Transverse colon (tissue), 4 donors: ENCODE measurements at regions of chr3 and their contacts with region 1.

Region 1: GRCh38 chr3:101195951-101196713 is 124.2 kb downstream of the IMPG2 start:
- DNase-seq: no peak
- H3K4me3 ChIP-seq: no peak overlapping the region
- H3K27ac ChIP-seq: no peak overlapping the region
- H3K4me1 ChIP-seq: peaks cover 0 to 7% (median 0%) of the 10 kb centered on the region in 4 donors
- H3K27me3 ChIP-seq: no peaks in the 10 kb centered on the region
- CTCF ChIP-seq: peak; percentile 49 to 64 (median 50)
- EP300 ChIP-seq: no peak
- POLR2A ChIP-seq: no peak

Region 2: DNA sequence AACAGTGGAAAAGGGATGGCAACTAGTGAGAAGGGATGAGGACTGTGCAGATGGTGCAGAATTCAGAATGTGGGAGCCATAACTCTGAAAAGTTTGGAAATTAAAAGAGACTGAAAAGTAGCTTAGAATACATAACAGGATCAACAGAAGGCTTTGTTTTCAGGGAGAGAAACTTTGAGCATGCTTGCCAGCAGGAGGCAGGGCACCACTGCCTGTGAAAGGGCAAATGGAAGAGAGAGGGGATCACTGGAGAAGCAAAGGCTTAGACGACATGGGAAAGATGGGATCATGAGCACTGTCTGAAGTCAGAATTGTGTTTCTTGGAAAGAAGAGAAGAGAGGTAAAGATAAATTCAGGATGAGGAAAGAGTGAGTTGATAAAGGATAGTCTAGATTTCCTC is 302.5 kb before region 1 on chr3:
- in situ Hi-C with region 1: no loop called
- intact Hi-C with region 1: loop called (anchors 10 kb)
- DNase-seq: peak; percentile 11
- H3K4me3 ChIP-seq: no peak overlapping the region
- H3K27ac ChIP-seq: no peak overlapping the region
- H3K4me1 ChIP-seq: no peaks in the 10 kb centered on the region
- H3K27me3 ChIP-seq: no peaks in the 10 kb centered on the region
- CTCF ChIP-seq: peak; percentile 29 to 37 (median 30)
- EP300 ChIP-seq: no peak
- POLR2A ChIP-seq: no peak

Region 3: GRCh38 chr3:101069901-101070798 is 126.0 kb before region 1 on chr3:
- in situ Hi-C with region 1: no loop called
- intact Hi-C with region 1: loop called (anchors 1 kb)
- DNase-seq: peak; percentile 84
- H3K4me3 ChIP-seq: peak overlapping the region in 1 of 4 donors; percentile 17
- H3K27ac ChIP-seq: peak overlapping the region; percentile 20 to 61 (median 38)
- H3K4me1 ChIP-seq: peaks cover 6 to 52% (median 12%) of the 10 kb centered on the region in 4 donors
- H3K27me3 ChIP-seq: no peaks in the 10 kb centered on the region
- CTCF ChIP-seq: peak; percentile 60 to 82 (median 72)
- EP300 ChIP-seq: no peak
- POLR2A ChIP-seq: no peak

Region 4: DNA sequence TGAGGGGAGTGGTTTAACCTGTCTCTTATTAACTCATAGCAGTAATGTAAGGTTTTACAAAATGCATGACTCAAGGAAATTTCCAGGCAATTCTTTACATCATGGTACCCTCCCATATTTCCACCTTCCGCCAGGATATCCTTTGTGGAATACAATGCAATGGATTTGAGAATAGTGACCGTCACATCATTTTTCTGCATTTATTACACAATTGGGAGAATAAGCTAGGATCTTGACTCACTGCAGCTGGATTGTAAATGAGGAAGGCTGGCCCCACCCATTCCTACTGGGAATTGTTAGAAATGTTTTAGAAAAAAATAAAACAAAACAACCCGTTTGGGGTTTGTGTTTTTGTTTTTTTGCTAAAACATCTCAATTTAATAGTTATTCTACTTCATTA is 26.9 kb after region 1 on chr3:
- in situ Hi-C with region 1: no loop called
- intact Hi-C with region 1: no loop called
- DNase-seq: no peak
- H3K4me3 ChIP-seq: no peak overlapping the region
- H3K27ac ChIP-seq: no peak overlapping the region
- H3K4me1 ChIP-seq: no peaks in the 10 kb centered on the region
- H3K27me3 ChIP-seq: no peaks in the 10 kb centered on the region
- CTCF ChIP-seq: no peak
- EP300 ChIP-seq: no peak
- POLR2A ChIP-seq: no peak

Region 5: DNA sequence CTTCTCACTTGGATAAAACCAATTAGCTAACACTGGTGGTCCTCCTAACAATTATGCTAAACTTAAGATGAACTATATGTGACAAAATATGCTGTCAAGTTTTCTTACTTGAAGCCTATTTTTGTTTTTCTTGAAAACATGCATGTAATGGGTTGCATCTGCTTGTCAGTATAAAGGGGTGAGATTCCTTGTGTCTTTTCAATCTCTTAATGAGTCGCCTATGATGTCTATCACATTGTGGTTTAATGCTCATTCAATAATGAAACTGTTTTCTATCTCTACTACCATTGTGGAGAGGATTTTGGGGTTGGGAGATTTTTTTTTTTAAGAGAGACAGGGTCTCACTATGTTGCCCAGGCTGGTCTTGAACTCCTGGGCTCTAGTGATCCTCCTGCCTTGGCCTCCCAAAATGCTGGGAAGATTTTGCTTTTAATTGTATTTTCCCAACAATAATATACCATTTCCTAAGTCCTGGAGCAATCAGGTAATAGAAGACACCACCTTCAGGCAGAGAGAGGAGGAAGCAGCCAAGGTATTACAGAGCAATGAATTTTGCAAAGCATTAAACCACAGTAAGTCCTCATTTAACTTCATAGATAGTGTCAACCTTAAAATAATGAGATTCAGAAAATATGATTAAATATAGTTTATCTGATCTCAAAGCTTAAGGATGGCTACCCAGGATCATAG is 348.2 kb after region 1 on chr3:
- in situ Hi-C with region 1: no loop called
- intact Hi-C with region 1: no loop called
- DNase-seq: no peak
- H3K4me3 ChIP-seq: no peak overlapping the region
- H3K27ac ChIP-seq: no peak overlapping the region
- H3K4me1 ChIP-seq: no peaks in the 10 kb centered on the region
- H3K27me3 ChIP-seq: no peaks in the 10 kb centered on the region
- CTCF ChIP-seq: no peak
- EP300 ChIP-seq: no peak
- POLR2A ChIP-seq: no peak